Lower lobe of right lung (tissue), 2 donors: ENCODE measurements at regions of chr22 and their contacts with region 1.

Region 1: GRCh38 chr22:35914665-35915476 is 113.8 kb downstream of the RBFOX2 start:
- DNase-seq: no peak
- ATAC-seq: peak; percentile 96 to 98
- H3K4me3 ChIP-seq: peak overlapping the region; percentile 54
- H3K27ac ChIP-seq: peak overlapping the region; percentile 75
- H3K4me1 ChIP-seq: peaks cover 50% of the 10 kb centered on the region
- H3K27me3 ChIP-seq: no peaks in the 10 kb centered on the region
- CTCF ChIP-seq: no peak

Region 2: GRCh38 chr22:35627264-35628041 is 287.4 kb before region 1 on chr22:
- intact Hi-C with region 1: loop called (anchors 10 kb)
- DNase-seq: peak; percentile 88
- ATAC-seq: peak; percentile 87
- H3K4me3 ChIP-seq: peak overlapping the region; percentile 56
- H3K27ac ChIP-seq: peak overlapping the region; percentile 78
- H3K4me1 ChIP-seq: peaks cover 17% of the 10 kb centered on the region
- H3K27me3 ChIP-seq: no peaks in the 10 kb centered on the region
- CTCF ChIP-seq: peak; percentile 49

Region 3: DNA sequence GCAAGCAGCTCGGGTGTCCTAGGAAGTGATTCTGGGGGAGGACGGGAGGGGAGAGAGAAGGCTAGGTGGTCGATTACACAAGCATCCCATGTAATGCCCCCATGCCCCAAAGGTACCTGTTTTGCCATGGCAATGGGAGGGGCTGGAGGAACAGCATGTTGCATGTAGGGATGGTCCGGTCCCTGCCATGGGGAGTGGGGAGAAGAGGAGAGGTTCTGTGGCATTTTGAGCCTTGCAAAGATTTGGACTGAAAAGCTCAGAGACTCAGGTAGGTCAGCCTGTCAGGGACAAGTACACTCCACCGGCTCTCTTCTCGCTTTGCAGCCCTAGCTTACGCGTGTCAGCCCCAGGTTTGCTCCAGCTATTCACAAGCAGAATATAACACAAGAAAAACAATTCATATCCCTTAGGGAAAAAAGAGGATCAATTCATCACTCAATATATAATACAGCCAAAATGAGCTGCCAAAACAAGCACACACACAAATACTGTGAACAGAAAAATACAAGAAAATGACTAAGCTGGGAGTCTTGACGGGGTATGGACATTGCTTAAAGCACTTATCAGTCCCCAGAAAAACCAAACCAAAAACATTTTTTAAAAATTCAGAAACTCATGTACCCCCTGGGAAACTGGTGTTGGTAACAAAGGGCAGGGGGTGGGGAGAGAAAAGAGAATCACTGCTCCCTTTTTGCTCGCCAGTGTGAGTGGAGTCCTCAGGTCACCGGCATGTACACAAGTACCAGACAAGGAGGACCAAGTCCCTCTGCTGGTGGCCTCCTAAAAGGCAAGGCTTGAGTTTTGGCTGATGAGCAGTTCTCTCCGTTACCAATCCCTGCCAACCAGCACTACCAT is 175.6 kb before region 1 on chr22:
- intact Hi-C with region 1: no loop called
- DNase-seq: no peak
- ATAC-seq: no peak
- H3K4me3 ChIP-seq: no peak overlapping the region
- H3K27ac ChIP-seq: no peak overlapping the region
- H3K4me1 ChIP-seq: no peaks in the 10 kb centered on the region
- H3K27me3 ChIP-seq: no peaks in the 10 kb centered on the region
- CTCF ChIP-seq: peak; percentile 16

Region 4: DNA sequence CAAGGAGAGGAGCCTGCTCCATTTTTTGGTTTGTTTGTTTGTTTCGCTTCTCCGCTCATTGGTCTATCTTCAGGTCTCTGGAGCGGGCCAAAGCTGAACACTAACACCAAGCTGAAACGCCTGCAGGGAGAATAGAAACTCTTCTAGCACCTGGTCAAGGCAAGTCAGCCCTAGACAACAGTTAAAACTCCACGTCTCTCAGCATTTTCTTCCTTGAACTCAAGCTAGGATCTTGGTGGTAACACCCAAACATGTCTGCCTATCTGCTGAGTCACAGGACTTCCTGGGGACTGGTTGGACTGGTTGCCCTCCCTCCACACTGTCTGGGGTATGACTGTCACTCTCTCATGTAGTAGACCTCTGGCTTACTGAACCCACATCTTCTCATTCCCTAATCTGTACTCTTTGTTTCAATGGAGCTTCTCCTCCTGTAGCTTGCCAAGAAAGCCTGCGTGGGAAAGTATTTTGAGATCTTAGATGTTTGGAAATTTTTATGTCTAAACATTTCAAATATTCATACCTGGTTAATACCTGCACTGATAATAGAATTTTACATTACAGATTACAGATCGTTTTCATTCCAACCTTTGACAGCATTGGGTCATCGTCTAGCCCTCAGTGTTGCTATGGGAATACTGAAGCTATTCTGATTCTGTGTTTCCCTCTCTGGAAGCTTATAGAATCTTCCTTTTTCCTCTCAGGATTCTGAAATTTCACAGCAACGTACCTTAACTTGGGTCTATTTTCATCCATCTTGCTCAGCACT is 137.8 kb after region 1 on chr22:
- intact Hi-C with region 1: no loop called
- DNase-seq: no peak
- ATAC-seq: peak; percentile 57 to 70
- H3K4me3 ChIP-seq: no peak overlapping the region
- H3K27ac ChIP-seq: no peak overlapping the region
- H3K4me1 ChIP-seq: no peaks in the 10 kb centered on the region
- H3K27me3 ChIP-seq: no peaks in the 10 kb centered on the region
- CTCF ChIP-seq: no peak